ENCODE measurements at regions of chr1 and their contacts with region 1.

Region 1: GRCh38 chr1:97820470-97821188 is 100.2 kb downstream of the DPYD start:
- DNase-seq: no peak
- ATAC-seq: peak; percentile 39
- H3K4me3 Mint-ChIP-seq: no peak overlapping the region
- H3K27ac Mint-ChIP-seq: no peak overlapping the region
- H3K4me1 Mint-ChIP-seq: no peaks in the 10 kb centered on the region
- H3K27me3 Mint-ChIP-seq: no peaks in the 10 kb centered on the region

Region 2: DNA sequence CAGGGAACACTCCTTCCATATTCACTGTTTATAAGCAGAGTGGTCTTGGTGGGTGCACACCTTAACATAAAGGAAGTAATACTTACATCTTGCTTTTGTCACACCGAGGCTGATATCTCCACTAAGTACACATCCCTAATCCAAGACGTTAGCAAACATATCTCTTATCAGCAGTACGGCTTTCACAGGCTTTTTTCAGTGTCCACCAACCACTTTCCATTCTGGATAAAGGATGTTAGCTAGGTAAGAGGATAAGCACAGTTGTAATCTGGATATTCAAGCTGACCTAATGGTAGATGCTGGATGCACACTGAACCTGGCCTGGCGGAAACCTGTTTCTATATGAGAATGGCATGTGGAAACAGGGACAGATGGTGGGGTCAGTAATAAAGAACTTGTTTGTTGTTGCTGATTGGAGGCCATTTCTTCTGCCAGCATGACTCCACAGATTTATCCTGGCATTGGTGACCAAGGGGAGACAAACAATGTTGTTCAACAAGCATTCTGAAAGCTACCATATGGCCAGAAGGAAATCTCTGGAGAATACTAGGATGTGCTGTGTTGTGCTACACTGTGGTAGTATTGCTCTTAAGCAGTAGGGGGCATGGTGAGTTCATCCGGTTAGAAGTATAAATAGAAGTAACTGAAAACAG is 682.6 kb before region 1 on chr1:
- CTCF ChIA-PET with region 1: interaction called, 4 read pairs
- POLR2A ChIA-PET with region 1: no interaction called
- intact Hi-C with region 1: loop called (anchors 1 to 5 kb)
- DNase-seq: peak; percentile 18
- ATAC-seq: peak; percentile 83
- H3K4me3 Mint-ChIP-seq: no peak overlapping the region
- H3K27ac Mint-ChIP-seq: no peak overlapping the region
- H3K4me1 Mint-ChIP-seq: no peaks in the 10 kb centered on the region
- H3K27me3 Mint-ChIP-seq: no peaks in the 10 kb centered on the region

Region 3: DNA sequence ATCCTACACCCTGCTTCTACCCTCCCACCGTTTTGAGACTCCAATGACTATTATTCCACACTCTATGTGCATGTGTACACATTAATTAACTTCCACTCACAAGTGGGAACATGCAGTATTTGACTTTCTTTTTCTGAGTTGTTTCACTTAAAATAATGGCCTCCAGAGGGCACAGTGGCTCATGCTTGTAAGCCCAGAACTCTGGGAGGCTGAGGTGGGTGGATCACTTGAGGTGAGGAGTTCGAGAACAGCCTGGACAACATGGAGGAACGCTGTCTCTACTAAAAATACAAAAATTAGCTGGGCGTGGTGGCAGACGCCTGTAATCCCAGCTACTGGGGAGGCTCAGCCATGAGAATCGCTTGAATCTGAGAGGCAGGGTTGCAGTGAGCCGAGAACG is 634.2 kb before region 1 on chr1:
- CTCF ChIA-PET with region 1: no interaction called
- POLR2A ChIA-PET with region 1: no interaction called
- intact Hi-C with region 1: loop called in 1 of 2 experiments (anchors 5 kb)
- DNase-seq: peak; percentile 20
- ATAC-seq: no peak
- H3K4me3 Mint-ChIP-seq: no peak overlapping the region
- H3K27ac Mint-ChIP-seq: no peak overlapping the region
- H3K4me1 Mint-ChIP-seq: no peaks in the 10 kb centered on the region
- H3K27me3 Mint-ChIP-seq: no peaks in the 10 kb centered on the region

Region 4: GRCh38 chr1:97379387-97380075 is 441.1 kb before region 1 on chr1:
- CTCF ChIA-PET with region 1: no interaction called
- POLR2A ChIA-PET with region 1: no interaction called
- intact Hi-C with region 1: no loop called
- DNase-seq: no peak
- ATAC-seq: peak; percentile 36
- H3K4me3 Mint-ChIP-seq: no peak overlapping the region
- H3K27ac Mint-ChIP-seq: no peak overlapping the region
- H3K4me1 Mint-ChIP-seq: peaks cover 5% of the 10 kb centered on the region
- H3K27me3 Mint-ChIP-seq: no peaks in the 10 kb centered on the region

Region 5: GRCh38 chr1:97562081-97562480 is 258.5 kb before region 1 on chr1:
- CTCF ChIA-PET with region 1: no interaction called
- POLR2A ChIA-PET with region 1: no interaction called
- intact Hi-C with region 1: no loop called
- DNase-seq: no peak
- ATAC-seq: no peak
- H3K4me3 Mint-ChIP-seq: no peak overlapping the region
- H3K27ac Mint-ChIP-seq: no peak overlapping the region
- H3K4me1 Mint-ChIP-seq: no peaks in the 10 kb centered on the region
- H3K27me3 Mint-ChIP-seq: no peaks in the 10 kb centered on the region

Measured in activated CD4-positive, alpha-beta T cell treated with anti-CD3 and anti-CD28 coated beads for 36 hours (primary cell).